CD8-positive, alpha-beta memory T cell (primary cell): ENCODE measurements at regions of chr10 and their contacts with region 1.

Region 1: DNA sequence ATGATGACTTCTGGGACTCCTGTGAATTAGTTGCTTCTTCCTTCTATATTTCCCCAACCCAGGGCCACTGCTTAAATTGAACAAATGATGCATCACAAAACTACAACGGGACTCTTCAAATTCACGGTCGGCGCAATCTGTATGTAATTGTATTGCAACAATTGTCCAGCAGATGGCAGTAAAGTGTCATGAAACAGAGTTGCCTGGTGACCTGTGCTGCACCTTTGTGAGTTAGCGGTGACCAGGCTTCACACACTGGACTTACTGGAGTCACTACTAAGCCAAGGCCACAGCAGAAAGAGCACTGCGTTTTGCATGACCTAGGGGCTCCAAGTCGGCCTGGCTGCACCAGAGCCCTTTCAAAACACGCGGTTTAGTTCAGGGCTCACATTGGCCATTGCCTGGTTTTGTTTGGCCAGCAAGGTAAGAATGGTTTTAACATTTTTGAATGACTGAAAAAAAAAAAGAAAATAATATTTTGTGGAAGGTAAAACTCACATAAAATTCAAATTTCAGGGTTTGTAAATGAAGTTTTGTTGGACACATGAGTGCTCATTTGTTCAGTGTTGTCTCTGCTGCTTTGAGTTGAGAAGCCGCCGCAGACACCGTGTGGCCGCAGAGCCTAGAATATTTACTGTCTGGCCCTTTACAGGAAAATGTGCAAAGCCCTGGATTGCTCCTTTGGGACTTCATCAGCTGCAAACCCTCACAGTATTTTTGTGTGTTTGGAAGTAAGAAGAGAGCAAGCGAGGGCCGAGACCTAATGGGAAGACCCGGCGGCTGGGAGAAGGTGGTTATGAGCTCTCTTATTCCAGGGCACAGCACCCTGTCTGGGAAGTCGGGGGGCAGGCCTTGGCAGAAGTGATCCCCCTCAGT is 23.2 kb upstream of the ZNF32 start:
- DNase-seq: peak in 3 of 5 donors; percentile 20 to 50 (median 40)
- H3K4me3 ChIP-seq: no peak overlapping the region
- H3K4me3 Mint-ChIP-seq: no peak overlapping the region
- H3K27ac ChIP-seq: no peak overlapping the region
- H3K27ac Mint-ChIP-seq: no peak overlapping the region
- H3K4me1 ChIP-seq: no peaks in the 10 kb centered on the region
- H3K4me1 Mint-ChIP-seq: peaks cover 3 to 11% (median 4%) of the 10 kb centered on the region in 3 donors
- H3K27me3 ChIP-seq: peaks cover 8% of the 10 kb centered on the region
- H3K27me3 Mint-ChIP-seq: peaks cover 31 to 50% of the 10 kb centered on the region in 2 donors

Region 2: DNA sequence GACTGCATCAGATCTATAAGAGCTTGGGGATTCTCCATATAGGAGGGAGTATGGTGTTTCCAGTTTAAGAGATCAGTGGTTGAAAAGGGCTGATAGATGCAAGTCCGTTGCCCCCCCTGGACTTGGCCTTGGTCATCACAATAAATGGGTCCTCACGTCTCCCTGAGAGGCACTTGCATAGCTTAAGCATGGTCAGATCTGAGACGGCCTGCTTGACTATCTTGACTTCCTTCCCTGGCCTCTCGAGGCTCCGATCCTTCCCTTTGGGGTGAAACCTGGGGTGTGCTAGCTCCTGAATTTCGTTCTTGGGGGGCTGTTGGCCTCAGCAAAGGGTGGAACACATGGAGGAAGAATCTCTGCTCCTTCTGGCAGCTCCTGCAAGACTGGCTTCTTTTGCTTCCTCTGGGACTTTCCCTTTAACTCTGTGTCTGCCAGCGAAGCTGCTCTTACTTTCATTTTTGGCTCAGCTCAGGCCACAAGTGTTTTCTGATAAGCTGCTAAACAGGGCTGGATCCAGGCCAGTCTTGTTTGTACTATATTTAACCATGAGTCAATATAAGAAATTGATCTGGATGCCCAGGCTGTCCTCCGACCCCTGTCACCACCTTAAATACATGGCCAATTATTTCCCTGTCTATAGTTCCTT is 76.8 kb before region 1 on chr10:
- CTCF ChIA-PET with region 1: no interaction called
- POLR2A ChIA-PET with region 1: no interaction called
- DNase-seq: peak in 2 of 5 donors; percentile 12 to 19
- H3K4me3 ChIP-seq: peak overlapping the region; percentile 35
- H3K4me3 Mint-ChIP-seq: peak overlapping the region; percentile 65 to 91 (median 87)
- H3K27ac ChIP-seq: no peak overlapping the region
- H3K27ac Mint-ChIP-seq: peak overlapping the region; percentile 41 to 97 (median 82)
- H3K4me1 ChIP-seq: peaks cover 23% of the 10 kb centered on the region
- H3K4me1 Mint-ChIP-seq: peaks cover 31 to 38% (median 32%) of the 10 kb centered on the region in 3 donors
- H3K27me3 ChIP-seq: no peaks in the 10 kb centered on the region
- H3K27me3 Mint-ChIP-seq: peaks cover 0 to 3% of the 10 kb centered on the region in 2 donors

Region 3: GRCh38 chr10:43689955-43690771 is 18.3 kb after region 1 on chr10:
- CTCF ChIA-PET with region 1: interaction called, 14 read pairs
- POLR2A ChIA-PET with region 1: no interaction called
- DNase-seq: peak; percentile 73 to 85 (median 80)
- H3K4me3 ChIP-seq: peak overlapping the region; percentile 91
- H3K4me3 Mint-ChIP-seq: peak overlapping the region; percentile 88 to 95 (median 92)
- H3K27ac ChIP-seq: peak overlapping the region; percentile 45
- H3K27ac Mint-ChIP-seq: peak overlapping the region in 5 of 8 donors; percentile 65 to 97 (median 78)
- H3K4me1 ChIP-seq: no peaks in the 10 kb centered on the region
- H3K4me1 Mint-ChIP-seq: peaks cover 3 to 12% (median 11%) of the 10 kb centered on the region in 3 donors
- H3K27me3 ChIP-seq: no peaks in the 10 kb centered on the region
- H3K27me3 Mint-ChIP-seq: peaks cover 12 to 19% of the 10 kb centered on the region in 2 donors

Region 4: DNA sequence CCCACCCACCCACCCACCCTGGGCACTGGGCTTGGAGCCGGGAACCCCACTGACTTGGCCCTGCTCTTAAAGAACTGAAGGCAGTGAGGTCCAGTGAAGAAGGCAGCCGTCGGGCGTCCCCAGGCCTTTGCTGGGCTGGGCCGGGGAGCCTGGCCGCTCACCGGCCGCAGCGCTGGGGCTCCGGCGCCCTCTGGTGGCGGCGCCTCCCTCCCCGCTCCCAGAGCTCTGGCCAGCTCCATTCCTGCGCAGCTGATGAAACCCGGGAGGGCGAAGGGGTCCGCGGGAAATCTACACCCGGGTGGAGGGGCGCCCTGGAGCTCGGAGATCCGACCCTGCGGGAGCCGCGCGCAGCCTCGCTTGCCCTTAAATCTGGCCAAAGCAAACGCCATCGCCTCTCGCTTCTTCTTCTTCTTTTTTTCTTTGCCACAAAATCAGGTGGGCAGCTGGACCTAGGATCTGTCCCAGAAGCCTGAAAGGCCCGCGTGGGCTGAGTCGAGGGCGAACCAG is 714.7 kb after region 1 on chr10:
- CTCF ChIA-PET with region 1: interaction called, 11 read pairs
- POLR2A ChIA-PET with region 1: no interaction called
- DNase-seq: peak in 4 of 5 donors; percentile 7 to 17 (median 12)
- H3K4me3 ChIP-seq: no peak overlapping the region
- H3K4me3 Mint-ChIP-seq: no peak overlapping the region
- H3K27ac ChIP-seq: no peak overlapping the region
- H3K27ac Mint-ChIP-seq: no peak overlapping the region
- H3K4me1 ChIP-seq: no peaks in the 10 kb centered on the region
- H3K4me1 Mint-ChIP-seq: peaks cover 2 to 6% (median 4%) of the 10 kb centered on the region in 3 donors
- H3K27me3 ChIP-seq: peaks cover 3% of the 10 kb centered on the region
- H3K27me3 Mint-ChIP-seq: peaks cover 30 to 40% of the 10 kb centered on the region in 2 donors

Region 5: GRCh38 chr10:44857363-44858016 is 1185.6 kb after region 1 on chr10:
- CTCF ChIA-PET with region 1: interaction called, 14 read pairs
- POLR2A ChIA-PET with region 1: no interaction called
- DNase-seq: peak in 4 of 5 donors; percentile 22 to 60 (median 38)
- H3K4me3 ChIP-seq: no peak overlapping the region
- H3K4me3 Mint-ChIP-seq: no peak overlapping the region
- H3K27ac ChIP-seq: no peak overlapping the region
- H3K27ac Mint-ChIP-seq: no peak overlapping the region
- H3K4me1 ChIP-seq: no peaks in the 10 kb centered on the region
- H3K4me1 Mint-ChIP-seq: no peaks in the 10 kb centered on the region
- H3K27me3 ChIP-seq: no peaks in the 10 kb centered on the region
- H3K27me3 Mint-ChIP-seq: peaks cover 0 to 8% of the 10 kb centered on the region in 2 donors